H1 (cell line): ENCODE measurements at regions of chr17 and their contacts with region 1.

Region 1: GRCh38 chr17:42405963-42406495 is 17.0 kb downstream of the CAVIN1 start:
- DNase-seq: peak in 1 of 2 experiments; percentile 96
- H3K4me3 ChIP-seq: no peak overlapping the region
- H3K27ac ChIP-seq: no peak overlapping the region
- H3K4me1 ChIP-seq: peaks cover 8 to 22% (median 17%) of the 10 kb centered on the region in 4 experiments; a peak in 6 of 7 replicates
- H3K27me3 ChIP-seq: no peaks in the 10 kb centered on the region
- CTCF ChIP-seq: peak; percentile 90 to 94 (median 93)
- EP300 ChIP-seq: no peak
- POLR2A ChIP-seq: no peak
- RAD21 ChIP-seq: peak; percentile 95 to 97

Region 2: DNA sequence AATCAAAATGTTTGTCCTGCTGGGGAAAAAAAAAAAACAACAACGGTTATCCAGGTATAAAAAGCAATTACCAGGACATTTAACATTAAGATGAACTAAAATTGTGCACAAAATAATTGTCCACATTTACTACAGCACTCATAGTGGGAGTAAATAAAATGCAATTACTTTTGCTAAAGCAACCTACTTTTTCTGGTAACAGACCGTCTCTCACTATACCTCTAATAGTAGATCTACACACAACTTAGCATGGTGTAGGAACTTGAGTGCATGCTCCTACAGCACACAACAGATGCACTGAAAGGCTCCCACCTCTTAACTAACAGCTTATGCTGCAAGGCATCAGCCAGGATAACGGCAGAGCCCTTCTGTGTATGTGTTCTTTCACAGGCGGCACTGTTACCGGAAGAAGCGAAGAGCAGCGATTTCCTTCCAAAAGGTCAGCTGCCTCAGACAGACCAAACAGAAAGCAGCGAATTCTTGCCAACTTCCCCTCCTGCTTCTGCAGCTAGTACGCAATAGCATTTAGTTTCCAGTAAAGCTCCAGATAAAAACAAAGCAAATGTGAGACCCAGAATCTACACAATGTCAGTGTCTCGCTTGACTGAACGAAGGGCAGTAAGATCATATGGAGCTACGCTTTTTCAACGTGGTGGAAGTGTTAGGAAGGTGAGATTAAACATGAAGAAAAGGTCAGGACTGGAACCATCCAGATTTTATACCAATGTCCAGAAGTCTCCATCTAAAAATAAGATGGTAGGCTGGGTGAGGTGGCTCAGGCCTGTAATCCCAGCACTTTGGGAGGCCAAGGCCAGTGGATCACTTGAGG is 157.5 kb before region 1 on chr17:
- CTCF ChIA-PET with region 1: interaction called, 13 read pairs
- POLR2A ChIA-PET with region 1: no interaction called
- DNase-seq: no peak
- H3K4me3 ChIP-seq: no peak overlapping the region
- H3K27ac ChIP-seq: peak overlapping the region; percentile 11; the same call in 1 of the 2 replicates
- H3K4me1 ChIP-seq: peaks cover 0 to 3% (median 2%) of the 10 kb centered on the region in 4 experiments; a peak in 5 of 7 replicates
- H3K27me3 ChIP-seq: no peaks in the 10 kb centered on the region
- CTCF ChIP-seq: no peak
- EP300 ChIP-seq: no peak
- POLR2A ChIP-seq: no peak
- RAD21 ChIP-seq: no peak

Region 3: DNA sequence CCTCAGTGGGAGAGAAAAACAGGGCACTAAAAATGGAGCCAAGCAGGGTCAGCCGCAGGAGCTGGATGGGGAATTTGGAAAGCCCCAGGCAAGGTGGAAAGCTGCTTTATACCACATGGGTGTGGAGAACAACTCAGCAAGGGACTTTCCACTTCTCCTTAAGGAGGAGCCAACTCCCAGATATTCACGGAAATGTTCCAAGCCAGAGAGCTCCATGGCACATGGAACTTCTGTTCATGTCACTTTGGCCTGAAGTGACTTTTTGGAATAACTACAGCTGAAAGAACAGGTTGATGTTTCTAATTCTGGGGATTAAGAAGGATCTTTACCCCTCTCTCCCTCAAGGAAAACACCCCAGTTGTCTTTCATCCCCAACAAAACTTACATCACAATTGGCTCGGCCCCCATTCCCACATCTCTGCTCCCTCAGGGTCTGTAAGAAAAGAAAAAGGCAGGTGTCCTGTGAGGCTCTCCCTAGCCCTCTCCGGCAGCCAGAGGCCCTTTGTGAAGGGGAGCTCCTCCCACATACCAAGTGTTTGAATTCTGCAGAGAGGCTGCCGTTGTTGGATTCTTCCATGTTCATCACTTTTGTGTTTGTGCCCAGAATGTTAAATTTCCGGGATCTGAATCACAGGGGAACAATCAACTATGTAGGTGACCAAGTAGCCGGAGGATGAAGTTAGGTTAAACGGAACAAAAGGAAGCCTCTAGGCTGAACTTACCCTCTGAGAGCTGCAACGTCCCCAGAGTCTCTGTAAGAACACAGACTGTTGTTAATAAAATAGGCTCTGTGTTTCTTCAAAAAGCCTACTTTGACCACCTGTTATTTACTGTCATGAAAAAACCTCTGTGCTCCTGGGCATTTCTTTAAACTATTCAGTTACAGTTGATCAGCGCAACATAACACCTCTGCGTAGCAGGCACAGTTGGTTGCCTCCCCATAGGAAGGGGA is 76.7 kb before region 1 on chr17:
- CTCF ChIA-PET with region 1: interaction called, 542 read pairs
- POLR2A ChIA-PET with region 1: interaction called, 12 read pairs
- DNase-seq: peak; percentile 74 to 89
- H3K4me3 ChIP-seq: peak overlapping the region in 2 of 4 experiments; percentile 17 to 39; a peak in 4 of 8 replicates
- H3K27ac ChIP-seq: peak overlapping the region; percentile 86
- H3K4me1 ChIP-seq: peaks cover 0 to 20% (median 9%) of the 10 kb centered on the region in 4 experiments; a peak in 5 of 7 replicates
- H3K27me3 ChIP-seq: no peaks in the 10 kb centered on the region
- CTCF ChIP-seq: no peak
- EP300 ChIP-seq: peak in 1 of 2 experiments; percentile 63; a peak in 1 of 3 replicates
- POLR2A ChIP-seq: peak in 1 of 2 experiments; percentile 73; a peak in 2 of 3 replicates
- RAD21 ChIP-seq: no peak

Region 4: GRCh38 chr17:42388381-42389134 is 17.5 kb before region 1 on chr17 and contains the start of gene STAT3:
- CTCF ChIA-PET with region 1: interaction called, 60 read pairs
- POLR2A ChIA-PET with region 1: interaction called, 33 read pairs
- DNase-seq: peak; percentile 100
- H3K4me3 ChIP-seq: peak within 1 kb of the TSS; percentile 79 to 91 (median 82)
- H3K27ac ChIP-seq: peak within 1 kb of the TSS; percentile 71; the same call in 1 of the 2 replicates
- H3K4me1 ChIP-seq: peaks cover 3 to 14% (median 6%) of the 10 kb centered on the region in 4 experiments
- H3K27me3 ChIP-seq: no peaks in the 10 kb centered on the region
- CTCF ChIP-seq: no peak
- EP300 ChIP-seq: peak; percentile 96 to 100
- POLR2A ChIP-seq: peak; percentile 13 to 72
- RAD21 ChIP-seq: peak in 1 of 2 experiments; percentile 29; a peak in 3 of 4 replicates
- total RNA-seq, gene STAT3: 94.1 and 94.3 TPM in 2 replicates

Region 5: DNA sequence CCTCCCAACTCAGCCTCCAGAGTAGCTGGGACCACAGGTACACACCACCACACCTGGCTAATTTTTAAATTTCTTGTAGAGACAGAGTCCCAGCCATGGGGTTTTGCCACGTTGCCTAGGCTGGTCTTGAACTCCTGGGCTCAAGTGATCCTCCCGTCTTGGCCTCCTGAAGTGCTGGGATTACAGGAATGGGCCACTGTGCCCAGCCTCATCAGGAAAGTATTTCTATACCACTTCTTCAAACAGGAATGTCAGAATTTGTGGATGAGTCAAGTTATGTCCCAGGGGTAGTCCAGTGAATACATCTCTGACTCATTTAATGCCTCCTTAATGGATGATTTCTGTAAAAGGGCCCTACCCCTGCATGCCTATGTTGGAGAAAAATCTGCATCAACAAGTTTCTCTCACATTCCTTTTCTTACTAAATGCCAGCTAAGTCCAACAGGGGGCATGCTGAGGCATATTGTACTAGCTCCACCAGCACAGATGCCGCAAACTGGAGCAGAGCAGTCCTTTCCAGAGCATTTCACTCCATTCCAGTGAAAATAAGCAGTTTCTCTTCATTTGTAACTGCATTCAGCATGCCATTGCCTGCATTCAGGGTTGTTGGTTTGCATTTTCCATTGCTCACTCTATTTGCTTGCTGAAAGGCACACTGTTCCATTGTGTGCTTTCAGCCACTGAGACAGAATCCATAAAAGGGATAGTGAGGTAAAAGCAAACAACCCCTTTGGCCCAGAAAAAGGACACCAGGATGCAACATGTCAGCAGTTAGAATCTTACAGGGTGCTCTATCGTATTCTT is 22.3 kb after region 1 on chr17:
- CTCF ChIA-PET with region 1: interaction called, 36 read pairs
- POLR2A ChIA-PET with region 1: interaction called, 19 read pairs
- DNase-seq: no peak
- H3K4me3 ChIP-seq: no peak overlapping the region
- H3K27ac ChIP-seq: peak overlapping the region; percentile 65
- H3K4me1 ChIP-seq: peaks cover 0 to 4% (median under 1%) of the 10 kb centered on the region in 4 experiments; a peak in 3 of 7 replicates
- H3K27me3 ChIP-seq: no peaks in the 10 kb centered on the region
- CTCF ChIP-seq: peak; percentile 48 to 84 (median 56)
- EP300 ChIP-seq: no peak
- POLR2A ChIP-seq: no peak
- RAD21 ChIP-seq: peak; percentile 55 to 65

Region 6: GRCh38 chr17:42456223-42457131 is 50.4 kb after region 1 on chr17:
- CTCF ChIA-PET with region 1: no interaction called
- POLR2A ChIA-PET with region 1: no interaction called
- DNase-seq: no peak
- H3K4me3 ChIP-seq: no peak overlapping the region
- H3K27ac ChIP-seq: no peak overlapping the region
- H3K4me1 ChIP-seq: peaks cover 0 to 8% (median 4%) of the 10 kb centered on the region in 4 experiments; a peak in 3 of 7 replicates
- H3K27me3 ChIP-seq: no peaks in the 10 kb centered on the region
- CTCF ChIP-seq: no peak
- EP300 ChIP-seq: no peak
- POLR2A ChIP-seq: no peak
- RAD21 ChIP-seq: no peak

Region 7: DNA sequence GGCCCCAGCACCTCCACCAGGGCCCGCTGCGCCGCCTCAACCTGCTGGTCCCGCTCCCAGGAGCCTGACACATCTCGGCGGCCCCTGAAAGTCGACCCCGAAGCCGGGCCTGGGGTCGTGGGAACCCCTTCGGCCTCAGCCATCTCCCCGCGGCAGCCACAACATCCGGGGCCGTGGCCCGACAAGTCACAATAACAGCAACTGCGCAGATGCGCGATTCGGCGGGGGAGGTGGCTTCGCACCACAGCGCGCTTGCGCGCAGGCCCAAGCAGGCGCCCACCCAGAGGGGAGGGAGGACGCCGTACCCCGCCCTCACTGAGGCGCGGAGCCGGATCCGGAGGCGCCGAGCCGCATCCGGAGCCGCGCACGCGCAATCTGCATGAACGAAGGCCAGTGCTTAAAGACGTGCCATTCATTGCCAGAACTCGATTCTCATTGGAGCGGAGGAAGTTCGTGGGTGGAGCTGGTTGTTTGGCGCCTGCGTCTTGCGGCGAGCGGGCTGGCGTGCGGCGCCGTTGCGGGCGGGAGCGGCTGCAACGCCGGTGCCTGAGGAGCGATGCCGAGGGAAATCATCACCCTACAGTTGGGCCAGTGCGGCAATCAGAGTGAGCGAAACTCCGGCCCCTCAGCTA is 203.3 kb after region 1 on chr17 and contains the starts of genes RETREG3 and TUBG1:
- CTCF ChIA-PET with region 1: no interaction called
- POLR2A ChIA-PET with region 1: no interaction called
- DNase-seq: peak; percentile 97 to 98
- H3K4me3 ChIP-seq: peak within 1 kb of the TSS; percentile 73 to 98 (median 91)
- H3K27ac ChIP-seq: peak within 1 kb of the TSS; percentile 46; the same call in 1 of the 2 replicates
- H3K4me1 ChIP-seq: peaks cover 0 to 4% (median 2%) of the 10 kb centered on the region in 4 experiments; a peak in 6 of 7 replicates
- H3K27me3 ChIP-seq: no peaks in the 10 kb centered on the region
- CTCF ChIP-seq: peak in 1 of 3 experiments; percentile 12; a peak in 1 of 4 replicates
- EP300 ChIP-seq: no peak
- POLR2A ChIP-seq: peak; percentile 66 to 77
- RAD21 ChIP-seq: peak in 1 of 2 experiments; percentile 31; a peak in 2 of 4 replicates
- total RNA-seq, gene RETREG3: 39.6 and 42.6 TPM in 2 replicates
- total RNA-seq, gene TUBG1: 107 and 109 TPM in 2 replicates